Activated CD4-positive, alpha-beta memory T cell treated with anti-CD3 and anti-CD28 coated beads, Interleukin-2, amount 10 ng/mL, durations not matched to agents 7 days and 5 days (primary cell): ENCODE measurements at regions of chr15 and their contacts with region 1.

Region 1: DNA sequence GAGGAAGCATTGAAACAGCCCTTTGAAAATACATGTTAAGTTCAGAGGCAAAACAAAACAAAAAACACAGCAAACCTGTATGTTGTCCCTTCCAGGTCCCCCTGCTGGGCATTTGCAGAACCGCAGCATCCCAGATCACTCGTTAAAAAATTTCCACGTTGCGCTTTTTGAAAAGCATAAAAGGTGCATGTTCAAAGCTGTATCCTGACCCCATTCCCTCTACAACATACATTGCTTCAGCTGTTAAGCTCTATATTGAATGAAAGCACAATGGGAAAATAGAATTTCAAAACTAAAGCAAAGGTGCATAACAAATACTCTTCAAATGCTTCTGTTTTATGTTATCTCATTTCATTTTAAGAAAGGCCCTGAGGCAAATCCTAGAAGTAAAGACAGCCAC is 328.3 kb downstream of the THSD4 start:
- DNase-seq: peak; percentile 36
- H3K4me3 Mint-ChIP-seq: no peak overlapping the region
- H3K27ac Mint-ChIP-seq: no peak overlapping the region
- H3K4me1 Mint-ChIP-seq: no peaks in the 10 kb centered on the region
- H3K27me3 Mint-ChIP-seq: peaks cover 10% of the 10 kb centered on the region

Region 2: DNA sequence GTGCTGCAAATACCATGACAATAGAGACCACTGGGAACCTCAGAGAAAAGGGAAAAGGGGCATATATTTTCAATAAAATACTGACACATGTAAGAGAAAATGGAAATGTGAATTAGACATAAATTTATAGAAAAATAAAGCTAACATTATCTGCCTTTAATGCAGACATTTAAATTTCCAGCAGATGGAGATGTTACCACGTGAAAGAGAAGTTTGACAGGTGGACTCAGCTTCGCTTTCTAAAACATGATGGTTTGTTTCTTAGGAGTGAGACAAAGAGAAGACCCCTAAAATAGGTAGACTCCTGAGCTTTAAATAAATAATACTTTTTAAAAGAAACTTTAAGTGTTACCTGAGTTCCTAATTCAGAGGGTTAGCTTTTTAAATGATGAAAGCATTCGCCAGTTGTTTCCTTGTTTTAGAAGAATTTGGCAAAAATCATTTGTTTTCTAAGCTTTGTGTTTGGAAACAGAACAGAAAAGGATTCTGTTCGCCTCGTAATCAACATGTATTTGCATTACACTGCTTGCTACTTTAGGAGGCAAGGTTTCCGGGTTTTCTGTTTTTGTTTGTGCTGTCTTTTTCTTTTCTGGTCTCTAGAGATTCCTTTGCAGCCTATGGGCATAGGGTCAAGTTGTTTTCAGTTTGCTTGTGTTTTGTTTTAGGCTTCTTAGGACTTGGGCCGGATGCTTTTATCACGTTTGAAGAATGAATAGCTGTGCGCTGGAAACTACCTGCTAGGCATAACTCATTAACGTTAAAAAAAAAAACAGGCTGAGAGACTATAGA is 56.9 kb before region 1 on chr15:
- CTCF ChIA-PET with region 1: interaction called, 20 read pairs
- POLR2A ChIA-PET with region 1: no interaction called
- DNase-seq: no peak
- H3K4me3 Mint-ChIP-seq: no peak overlapping the region
- H3K27ac Mint-ChIP-seq: no peak overlapping the region
- H3K4me1 Mint-ChIP-seq: peaks cover 1% of the 10 kb centered on the region
- H3K27me3 Mint-ChIP-seq: peaks cover 24% of the 10 kb centered on the region

Region 3: DNA sequence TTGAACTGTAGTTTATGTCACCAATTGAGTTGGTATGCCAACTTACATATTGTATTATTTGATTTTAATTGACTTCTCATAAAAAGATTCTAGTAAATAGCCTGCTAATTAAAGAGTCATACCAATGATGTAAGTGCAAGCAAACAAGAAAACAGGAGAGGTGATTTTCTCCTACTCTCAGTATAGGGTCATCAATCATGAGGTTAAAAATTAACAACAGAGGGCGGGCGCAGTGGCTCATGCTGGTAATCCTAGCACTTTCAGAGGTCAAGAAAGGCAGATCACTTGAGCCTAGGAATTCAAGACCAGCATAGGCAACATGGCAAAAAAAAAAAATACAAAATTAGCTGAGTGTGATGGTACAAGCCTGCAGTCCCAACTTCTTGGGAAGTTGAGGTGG is 565.7 kb after region 1 on chr15:
- CTCF ChIA-PET with region 1: no interaction called
- POLR2A ChIA-PET with region 1: no interaction called
- DNase-seq: no peak
- H3K4me3 Mint-ChIP-seq: no peak overlapping the region
- H3K27ac Mint-ChIP-seq: no peak overlapping the region
- H3K4me1 Mint-ChIP-seq: no peaks in the 10 kb centered on the region
- H3K27me3 Mint-ChIP-seq: no peaks in the 10 kb centered on the region